ENCODE measurements at regions of chr3 and their contacts with region 1.

Region 1: GRCh38 chr3:172536993-172537419 is 13.8 kb upstream of the TNFSF10 start:
- DNase-seq: peak; percentile 24
- ATAC-seq: peak; percentile 70
- H3K4me3 Mint-ChIP-seq: peak overlapping the region; percentile 5
- H3K27ac Mint-ChIP-seq: peak overlapping the region; percentile 81
- H3K4me1 Mint-ChIP-seq: peaks cover 35% of the 10 kb centered on the region
- H3K27me3 Mint-ChIP-seq: no peaks in the 10 kb centered on the region

Region 2: GRCh38 chr3:172550347-172550943 is 13.4 kb after region 1 on chr3:
- CTCF ChIA-PET with region 1: interaction called, 6 read pairs
- POLR2A ChIA-PET with region 1: no interaction called
- intact Hi-C with region 1: loop called in 1 of 2 experiments (anchors 2 kb)
- DNase-seq: peak; percentile 92
- ATAC-seq: peak; percentile 100
- H3K4me3 Mint-ChIP-seq: no peak overlapping the region
- H3K27ac Mint-ChIP-seq: peak overlapping the region; percentile 82
- H3K4me1 Mint-ChIP-seq: peaks cover 32% of the 10 kb centered on the region
- H3K27me3 Mint-ChIP-seq: no peaks in the 10 kb centered on the region

Measured in activated CD4-positive, alpha-beta T cell treated with anti-CD3 and anti-CD28 coated beads for 36 hours (primary cell).